Caco-2 (cell line): ENCODE measurements at regions of chrX and their contacts with region 1.

Region 1: GRCh38 chrX:68699960-68700746 is 52.7 kb downstream of the STARD8 start:
- DNase-seq: no peak
- H3K4me3 ChIP-seq: no peak overlapping the region
- H3K4me3 Mint-ChIP-seq: no peak overlapping the region
- H3K27ac Mint-ChIP-seq: no peak overlapping the region
- H3K4me1 ChIP-seq: no peaks in the 10 kb centered on the region
- H3K4me1 Mint-ChIP-seq: no peaks in the 10 kb centered on the region
- H3K27me3 ChIP-seq: no peaks in the 10 kb centered on the region
- H3K27me3 Mint-ChIP-seq: no peaks in the 10 kb centered on the region
- CTCF ChIP-seq: no peak

Region 2: DNA sequence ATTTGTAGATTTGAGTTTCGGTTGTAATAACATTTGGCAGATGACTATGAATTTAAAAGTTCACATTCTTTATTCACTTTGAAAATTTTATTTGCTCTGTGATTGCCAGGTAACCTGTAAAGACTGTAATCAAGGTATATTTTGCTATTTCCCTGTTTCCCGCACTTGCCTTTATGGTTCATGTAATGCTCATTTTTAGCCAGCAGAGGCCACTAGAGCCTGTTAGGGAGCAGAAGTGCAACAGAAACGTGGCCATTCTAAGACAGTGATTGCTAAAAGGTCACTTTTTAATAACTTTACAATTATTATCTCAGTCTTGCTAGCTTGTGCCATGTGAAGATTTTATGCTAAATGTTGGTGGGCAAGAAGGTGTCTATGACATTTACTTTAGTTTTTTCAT is 188.9 kb before region 1 on chrX:
- CTCF ChIA-PET with region 1: no interaction called
- POLR2A ChIA-PET with region 1: no interaction called
- intact Hi-C with region 1: loop called (anchors 5 kb)
- DNase-seq: peak in 1 of 2 experiments; percentile 55
- H3K4me3 ChIP-seq: no peak overlapping the region
- H3K4me3 Mint-ChIP-seq: no peak overlapping the region
- H3K27ac Mint-ChIP-seq: no peak overlapping the region
- H3K4me1 ChIP-seq: no peaks in the 10 kb centered on the region
- H3K4me1 Mint-ChIP-seq: peaks cover 7% of the 10 kb centered on the region
- H3K27me3 ChIP-seq: no peaks in the 10 kb centered on the region
- H3K27me3 Mint-ChIP-seq: no peaks in the 10 kb centered on the region
- CTCF ChIP-seq: peak; percentile 63 to 66

Region 3: DNA sequence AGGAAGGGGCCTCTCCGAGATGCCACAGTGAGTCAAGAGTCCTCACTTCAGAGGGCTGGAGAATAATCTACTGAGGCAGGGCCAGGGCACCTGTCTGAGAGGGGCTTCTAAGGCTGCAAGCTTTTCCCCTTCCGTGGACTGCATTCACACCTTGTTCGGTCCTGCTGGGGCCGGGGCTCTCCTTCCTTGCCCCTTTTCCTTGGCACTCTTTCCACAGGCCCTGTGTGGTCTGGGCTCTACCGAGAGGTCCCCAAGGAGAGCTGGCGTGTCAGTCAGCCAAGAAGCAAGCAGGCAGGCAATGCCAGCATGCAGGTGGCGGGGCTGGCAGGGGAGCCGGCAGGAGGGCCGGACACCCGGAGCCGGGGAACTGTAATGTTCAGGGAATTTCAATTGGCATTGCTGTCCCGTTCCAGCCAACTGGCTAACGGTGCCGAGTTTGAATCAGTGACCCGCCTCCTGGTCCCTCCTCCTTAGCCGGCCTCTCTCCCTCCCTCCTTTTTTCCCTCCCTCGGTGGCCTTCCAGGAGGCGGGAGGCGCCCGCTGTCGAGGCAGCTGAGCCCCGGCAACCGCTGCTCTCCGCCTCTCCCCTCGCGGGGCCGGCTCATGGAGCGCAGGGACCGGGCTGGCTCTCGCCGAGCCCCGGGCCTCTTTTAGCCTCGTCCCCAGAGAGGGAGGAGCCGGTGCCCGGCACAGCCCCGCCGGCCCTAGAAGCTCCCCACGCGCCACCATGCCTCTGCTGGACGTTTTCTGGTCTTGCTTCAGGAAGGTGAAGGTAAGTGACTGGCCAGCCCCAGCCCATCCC is 52.8 kb before region 1 on chrX and contains the start of gene STARD8:
- CTCF ChIA-PET with region 1: no interaction called
- POLR2A ChIA-PET with region 1: no interaction called
- intact Hi-C with region 1: loop called (anchors 10 kb)
- DNase-seq: peak; percentile 48 to 49
- H3K4me3 ChIP-seq: peak within 1 kb of the TSS; percentile 6; the same call in 1 of the 2 replicates
- H3K4me3 Mint-ChIP-seq: peak within 1 kb of the TSS; percentile 14
- H3K27ac Mint-ChIP-seq: no peak within 1 kb of the TSS
- H3K4me1 ChIP-seq: no peaks in the 10 kb centered on the region
- H3K4me1 Mint-ChIP-seq: no peaks in the 10 kb centered on the region
- H3K27me3 ChIP-seq: no peaks in the 10 kb centered on the region
- H3K27me3 Mint-ChIP-seq: peaks cover 5% of the 10 kb centered on the region
- CTCF ChIP-seq: no peak
- total RNA-seq, gene STARD8: not detected in 2 replicates

Region 4: DNA sequence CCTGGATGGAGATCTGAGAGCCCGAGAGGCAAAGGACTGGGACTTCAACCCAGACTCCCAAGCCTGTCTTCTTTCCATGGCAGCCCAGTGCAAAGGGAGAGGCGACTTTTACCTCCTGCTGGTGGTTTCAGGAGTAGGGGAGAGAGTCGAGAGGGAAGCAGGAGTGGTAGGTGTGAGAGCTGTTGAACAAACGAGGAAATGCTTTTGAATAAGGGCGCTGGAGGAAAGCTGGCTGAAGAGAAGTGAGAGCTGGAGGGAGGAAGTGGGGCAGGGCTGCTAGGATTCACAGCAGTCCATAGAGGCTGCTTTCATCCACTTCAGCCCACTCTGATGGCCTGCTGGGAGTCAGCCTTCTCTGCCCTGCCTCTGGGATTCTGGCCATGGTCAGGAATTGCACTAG is 46.8 kb after region 1 on chrX:
- CTCF ChIA-PET with region 1: no interaction called
- POLR2A ChIA-PET with region 1: no interaction called
- intact Hi-C with region 1: no loop called
- DNase-seq: no peak
- H3K4me3 ChIP-seq: no peak overlapping the region
- H3K4me3 Mint-ChIP-seq: no peak overlapping the region
- H3K27ac Mint-ChIP-seq: no peak overlapping the region
- H3K4me1 ChIP-seq: no peaks in the 10 kb centered on the region
- H3K4me1 Mint-ChIP-seq: no peaks in the 10 kb centered on the region
- H3K27me3 ChIP-seq: no peaks in the 10 kb centered on the region
- H3K27me3 Mint-ChIP-seq: no peaks in the 10 kb centered on the region
- CTCF ChIP-seq: no peak